AG04450 (cell line): ENCODE measurements at regions of chr5 and their contacts with region 1.

Region 1: GRCh38 chr5:78779771-78780616 is 131.4 kb upstream of the LHFPL2 start:
- DNase-seq: peak; percentile 79
- H3K4me3 ChIP-seq: no peak overlapping the region
- H3K27ac ChIP-seq: peak overlapping the region; percentile 69
- H3K27me3 ChIP-seq: no peaks in the 10 kb centered on the region
- CTCF ChIP-seq: no peak

Region 2: GRCh38 chr5:78793907-78794661 is 14.1 kb after region 1 on chr5:
- CTCF ChIA-PET with region 1: no interaction called
- POLR2A ChIA-PET with region 1: no interaction called
- DNase-seq: no peak
- H3K4me3 ChIP-seq: no peak overlapping the region
- H3K27ac ChIP-seq: no peak overlapping the region
- H3K27me3 ChIP-seq: no peaks in the 10 kb centered on the region
- CTCF ChIP-seq: no peak

Region 3: DNA sequence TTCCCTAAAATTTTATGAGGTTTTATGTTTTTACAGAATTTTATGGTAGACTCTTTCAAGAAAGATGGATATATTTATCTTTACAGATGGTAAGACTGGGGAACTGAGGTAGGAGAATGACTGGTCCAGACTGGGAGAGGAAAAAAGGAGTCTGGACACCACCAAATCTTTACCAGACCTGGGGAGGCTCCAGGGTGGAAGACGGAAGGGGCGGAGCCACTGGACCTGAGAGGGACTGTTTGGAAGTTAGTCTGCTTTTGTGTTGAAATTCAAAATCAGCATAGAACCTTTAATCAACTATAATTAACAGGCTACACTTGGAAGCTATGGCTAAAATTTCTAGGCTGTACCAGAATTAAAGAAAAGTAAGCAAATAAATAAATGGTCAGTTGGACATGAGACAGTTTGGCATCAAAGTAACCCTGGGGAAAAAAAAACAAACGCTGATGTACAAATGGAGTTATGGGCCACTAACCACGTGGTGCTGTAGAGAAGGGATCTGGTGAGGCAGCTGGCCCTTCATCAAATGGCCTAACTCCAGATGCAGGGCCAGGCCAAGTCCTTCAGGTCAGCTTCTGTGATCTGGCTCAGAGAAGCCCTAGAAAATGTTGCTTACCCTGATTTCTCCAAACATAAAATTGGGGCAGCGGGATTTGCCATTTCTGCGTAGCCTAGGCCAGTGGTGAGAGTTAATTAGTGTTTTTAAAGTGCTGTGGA is 50.0 kb after region 1 on chr5:
- CTCF ChIA-PET with region 1: no interaction called
- POLR2A ChIA-PET with region 1: interaction called, 13 read pairs
- DNase-seq: no peak
- H3K4me3 ChIP-seq: no peak overlapping the region
- H3K27ac ChIP-seq: no peak overlapping the region
- H3K27me3 ChIP-seq: no peaks in the 10 kb centered on the region
- CTCF ChIP-seq: no peak